ENCODE measurements at regions of chr7 and their contacts with region 1.

Region 1: DNA sequence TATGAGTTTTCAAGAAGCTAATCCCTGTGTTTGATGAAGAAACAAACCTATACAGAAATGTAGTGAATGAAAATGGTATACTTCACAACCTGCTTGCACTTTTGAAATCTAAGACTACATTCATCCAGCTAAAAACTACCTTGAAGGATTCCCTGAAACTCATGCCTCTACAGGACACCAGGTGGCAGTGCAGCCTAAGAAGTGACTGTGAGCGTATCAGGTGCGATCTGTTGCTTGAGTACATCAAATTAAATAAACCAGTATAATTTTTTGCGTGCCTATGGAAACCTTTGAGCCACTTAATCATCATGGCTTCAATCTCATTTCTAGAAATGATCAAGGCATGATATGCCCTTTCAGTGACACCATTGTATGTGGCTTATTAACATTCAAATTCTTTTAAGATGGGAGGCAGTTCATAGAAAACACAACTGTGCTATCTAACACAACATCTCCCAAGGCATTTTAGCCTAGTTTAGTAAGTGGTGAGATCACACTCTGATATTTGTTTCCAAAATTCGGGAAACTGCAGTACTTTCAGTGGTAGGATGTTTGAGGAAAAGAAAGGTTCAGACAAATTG is 57.4 kb downstream of the PPP1R17 start:
- DNase-seq: peak; percentile 67
- ATAC-seq: peak; percentile 73
- H3K4me3 Mint-ChIP-seq: no peak overlapping the region
- H3K27ac Mint-ChIP-seq: no peak overlapping the region
- H3K4me1 Mint-ChIP-seq: no peaks in the 10 kb centered on the region
- H3K27me3 Mint-ChIP-seq: peaks cover 89% of the 10 kb centered on the region
- CTCF ChIP-seq: peak; percentile 71

Region 2: DNA sequence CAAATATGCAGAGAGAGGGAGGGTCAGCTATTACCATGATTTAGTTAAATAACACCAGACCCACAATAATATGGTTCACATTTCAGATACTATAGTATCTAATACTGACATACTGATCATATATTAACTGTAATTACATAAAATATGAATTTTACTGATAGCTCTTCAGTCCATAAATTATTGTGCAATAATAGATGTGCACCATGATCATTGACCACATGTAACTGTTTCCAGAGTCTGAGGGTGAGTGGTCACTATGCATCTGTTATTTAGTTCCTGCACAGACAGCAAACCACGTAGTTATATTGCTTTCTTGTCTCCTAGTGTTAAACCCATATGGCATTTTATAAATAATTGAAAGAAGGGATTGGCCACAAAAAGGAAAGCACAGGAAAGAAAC is 28.0 kb before region 1 on chr7:
- CTCF ChIA-PET with region 1: no interaction called
- POLR2A ChIA-PET with region 1: no interaction called
- DNase-seq: no peak
- ATAC-seq: no peak
- H3K4me3 Mint-ChIP-seq: no peak overlapping the region
- H3K27ac Mint-ChIP-seq: no peak overlapping the region
- H3K4me1 Mint-ChIP-seq: peaks cover 6% of the 10 kb centered on the region
- H3K27me3 Mint-ChIP-seq: peaks cover 62% of the 10 kb centered on the region
- CTCF ChIP-seq: no peak

Region 3: DNA sequence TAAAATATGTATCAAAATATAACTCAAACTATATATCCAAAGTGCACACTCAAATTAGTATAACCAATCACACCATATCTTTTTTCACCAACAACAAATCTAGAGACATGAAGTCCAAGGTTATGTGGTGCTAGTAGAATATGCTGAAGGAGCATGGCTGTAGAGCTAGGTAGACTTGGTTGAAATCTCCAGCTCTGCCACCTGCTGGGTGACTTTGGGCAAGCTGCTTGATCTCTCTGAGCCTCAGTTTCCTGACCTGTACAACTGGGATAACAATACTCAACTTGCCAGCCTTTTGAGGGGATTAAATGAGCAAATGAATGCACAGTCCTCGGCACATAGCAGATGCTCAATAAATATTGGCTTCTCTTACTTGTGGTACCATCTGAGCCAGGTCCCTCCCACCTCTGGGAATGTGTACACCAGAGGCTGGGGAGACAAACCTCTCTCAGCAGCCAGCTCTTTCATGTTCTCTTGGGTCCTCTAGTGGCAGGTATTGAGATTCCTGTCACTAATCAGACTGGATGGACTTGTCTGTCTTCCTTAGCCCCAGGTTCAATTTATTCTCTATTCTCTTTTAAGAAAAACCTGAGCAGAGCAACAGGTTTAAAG is 420.1 kb after region 1 on chr7:
- CTCF ChIA-PET with region 1: interaction called, 19 read pairs
- POLR2A ChIA-PET with region 1: no interaction called
- DNase-seq: peak; percentile 28
- ATAC-seq: peak; percentile 96
- H3K4me3 Mint-ChIP-seq: no peak overlapping the region
- H3K27ac Mint-ChIP-seq: no peak overlapping the region
- H3K4me1 Mint-ChIP-seq: no peaks in the 10 kb centered on the region
- H3K27me3 Mint-ChIP-seq: peaks cover 23% of the 10 kb centered on the region
- CTCF ChIP-seq: peak; percentile 50

Region 4: GRCh38 chr7:32204361-32205018 is 460.1 kb after region 1 on chr7:
- CTCF ChIA-PET with region 1: interaction called, 37 read pairs
- POLR2A ChIA-PET with region 1: no interaction called
- DNase-seq: peak; percentile 65
- ATAC-seq: peak; percentile 91
- H3K4me3 Mint-ChIP-seq: no peak overlapping the region
- H3K27ac Mint-ChIP-seq: no peak overlapping the region
- H3K4me1 Mint-ChIP-seq: no peaks in the 10 kb centered on the region
- H3K27me3 Mint-ChIP-seq: peaks cover 61% of the 10 kb centered on the region
- CTCF ChIP-seq: 0 out of 2 replicates have a peak, but pooled peaks have one; percentile 34